Adrenal gland (tissue), 19 donors: ENCODE measurements at regions of chr9 and their contacts with region 1.

Region 1: GRCh38 chr9:129737479-129738274 is 15.2 kb downstream of the PTGES start:
- DNase-seq: peak; percentile 75 to 92 (median 86)
- H3K4me3 ChIP-seq: peak overlapping the region in 3 of 4 donors; percentile 18 to 65 (median 33)
- H3K27ac ChIP-seq: peak overlapping the region in 2 of 5 donors; percentile 41 to 67
- H3K4me1 ChIP-seq: peaks cover 0 to 3% of the 10 kb centered on the region in 2 donors
- H3K27me3 ChIP-seq: no peaks in the 10 kb centered on the region
- CTCF ChIP-seq: peak; percentile 94 to 100 (median 98)
- POLR2A ChIP-seq: peak in 1 of 2 donors; percentile 27

Region 2: DNA sequence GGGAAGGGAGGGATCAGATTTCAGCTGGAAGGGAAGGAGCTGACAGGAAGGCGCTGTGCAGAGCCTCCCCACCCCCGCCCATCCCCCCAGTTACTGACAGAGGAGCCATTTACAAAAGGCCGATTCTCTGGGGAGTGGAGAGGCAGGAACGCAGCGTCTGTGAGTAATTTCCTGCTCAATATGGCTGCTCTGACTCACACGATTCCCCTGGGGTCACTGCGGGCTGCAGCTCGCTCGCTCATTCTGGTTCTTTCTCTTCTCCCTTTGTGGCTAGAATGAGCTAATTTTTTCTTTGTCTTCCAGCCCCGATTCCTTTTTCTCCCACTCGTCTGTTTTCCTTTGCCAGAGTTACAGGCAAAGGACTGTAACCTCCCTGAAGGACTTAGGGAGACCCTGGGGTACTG is 597.7 kb before region 1 on chr9:
- intact Hi-C with region 1: loop called in 1 of 2 experiments (anchors 10 kb)
- DNase-seq: peak; percentile 90 to 98 (median 97)
- H3K4me3 ChIP-seq: peak overlapping the region in 3 of 4 donors; percentile 26 to 50 (median 45)
- H3K27ac ChIP-seq: peak overlapping the region; percentile 98 to 100 (median 100)
- H3K4me1 ChIP-seq: peaks cover 57 to 78% of the 10 kb centered on the region in 2 donors
- H3K27me3 ChIP-seq: no peaks in the 10 kb centered on the region
- CTCF ChIP-seq: no peak
- POLR2A ChIP-seq: peak; percentile 20 to 83

Region 3: DNA sequence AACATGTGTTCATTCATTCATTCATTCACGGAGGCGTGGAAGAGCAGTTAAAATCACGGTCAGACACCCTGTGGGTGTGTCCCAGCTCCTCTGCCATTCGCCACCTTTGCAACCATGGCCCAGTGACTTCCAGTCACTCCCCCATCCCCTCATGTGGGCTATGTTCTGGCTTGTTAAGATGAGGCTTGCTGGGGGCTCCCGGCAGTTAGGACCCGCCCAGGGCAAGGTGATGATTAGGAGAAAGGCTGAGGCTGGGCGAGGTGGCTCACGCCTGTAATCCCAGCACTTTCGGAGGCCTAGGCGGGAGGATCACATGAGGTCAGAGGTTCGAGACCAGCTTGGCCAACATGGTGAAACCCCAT is 40.1 kb after region 1 on chr9:
- intact Hi-C with region 1: loop called in 1 of 2 experiments (anchors 2 kb)
- DNase-seq: no peak
- H3K4me3 ChIP-seq: no peak overlapping the region
- H3K27ac ChIP-seq: peak overlapping the region in 4 of 5 donors; percentile 26 to 90 (median 64)
- H3K4me1 ChIP-seq: peaks cover 16 to 22% of the 10 kb centered on the region in 2 donors
- H3K27me3 ChIP-seq: no peaks in the 10 kb centered on the region
- CTCF ChIP-seq: no peak
- POLR2A ChIP-seq: no peak